Activated B cell treated with CpG ODN at 0.5 μM for 24 hours (primary cell): ENCODE measurements at regions of chr10 and their contacts with region 1.

Region 1: GRCh38 chr10:3776796-3777571 is 8.0 kb downstream of the KLF6 start:
- DNase-seq: no peak
- ATAC-seq: peak; percentile 26
- H3K4me3 Mint-ChIP-seq: peak overlapping the region; percentile 15
- H3K27ac Mint-ChIP-seq: peak overlapping the region; percentile 67
- H3K4me1 Mint-ChIP-seq: peaks cover 62% of the 10 kb centered on the region
- H3K27me3 Mint-ChIP-seq: no peaks in the 10 kb centered on the region
- CTCF ChIP-seq: no peak

Region 2: GRCh38 chr10:3740157-3740871 is 36.7 kb before region 1 on chr10:
- CTCF ChIA-PET with region 1: no interaction called
- POLR2A ChIA-PET with region 1: interaction called, 10 read pairs
- intact Hi-C with region 1: no loop called
- DNase-seq: no peak
- ATAC-seq: peak; percentile 42
- H3K4me3 Mint-ChIP-seq: no peak overlapping the region
- H3K27ac Mint-ChIP-seq: no peak overlapping the region
- H3K4me1 Mint-ChIP-seq: peaks cover 14% of the 10 kb centered on the region
- H3K27me3 Mint-ChIP-seq: no peaks in the 10 kb centered on the region
- CTCF ChIP-seq: no peak

Region 3: GRCh38 chr10:3763035-3763456 is 13.9 kb before region 1 on chr10:
- CTCF ChIA-PET with region 1: interaction called, 8 read pairs
- POLR2A ChIA-PET with region 1: interaction called, 191 read pairs
- intact Hi-C with region 1: loop called (anchors 1 kb)
- DNase-seq: no peak
- ATAC-seq: no peak
- H3K4me3 Mint-ChIP-seq: no peak overlapping the region
- H3K27ac Mint-ChIP-seq: peak overlapping the region; percentile 99
- H3K4me1 Mint-ChIP-seq: peaks cover 87% of the 10 kb centered on the region
- H3K27me3 Mint-ChIP-seq: no peaks in the 10 kb centered on the region
- CTCF ChIP-seq: no peak